Caco-2 (cell line): ENCODE measurements at regions of chr12 and their contacts with region 1.

Region 1: GRCh38 chr12:124036674-124037109 is 63.7 kb downstream of the ZNF664 start:
- DNase-seq: peak in 1 of 2 experiments; percentile 38
- H3K4me3 ChIP-seq: no peak overlapping the region
- H3K4me3 Mint-ChIP-seq: no peak overlapping the region
- H3K27ac Mint-ChIP-seq: no peak overlapping the region
- H3K4me1 ChIP-seq: peaks cover 6% of the 10 kb centered on the region
- H3K4me1 Mint-ChIP-seq: peaks cover 12% of the 10 kb centered on the region
- H3K27me3 ChIP-seq: no peaks in the 10 kb centered on the region
- H3K27me3 Mint-ChIP-seq: no peaks in the 10 kb centered on the region
- CTCF ChIP-seq: peak; percentile 87 to 94

Region 2: DNA sequence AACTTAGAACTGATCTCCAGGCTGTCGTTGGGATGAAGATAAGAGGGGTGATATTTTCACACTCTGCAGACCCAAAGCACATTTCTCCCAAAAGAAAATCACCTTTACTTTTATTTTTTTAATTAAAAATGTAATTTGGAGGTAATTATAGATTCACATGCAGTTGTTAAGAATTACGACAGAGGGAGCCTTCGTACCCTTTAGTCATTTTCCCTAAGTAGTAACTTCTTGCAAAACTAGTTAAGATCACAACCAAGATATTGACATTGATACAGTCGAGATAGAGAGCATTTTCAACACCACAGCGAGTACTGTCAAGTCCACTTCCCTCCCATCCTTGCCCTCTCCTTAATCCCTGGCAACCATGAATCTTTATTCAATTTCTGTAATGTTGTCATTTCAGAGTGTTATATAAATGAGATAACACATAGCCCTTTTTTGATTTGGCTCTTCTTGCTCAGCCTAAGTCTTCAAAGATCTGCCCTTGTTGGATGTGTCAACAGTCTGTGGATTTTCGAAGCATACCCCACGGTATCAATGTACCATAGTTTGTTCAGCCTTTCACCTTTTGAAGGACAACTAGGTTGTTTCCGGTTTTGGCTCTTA is 235.0 kb before region 1 on chr12:
- CTCF ChIA-PET with region 1: interaction called, 4 read pairs
- POLR2A ChIA-PET with region 1: no interaction called
- intact Hi-C with region 1: loop called (anchors 2 kb)
- DNase-seq: no peak
- H3K4me3 ChIP-seq: no peak overlapping the region
- H3K4me3 Mint-ChIP-seq: no peak overlapping the region
- H3K27ac Mint-ChIP-seq: no peak overlapping the region
- H3K4me1 ChIP-seq: no peaks in the 10 kb centered on the region
- H3K4me1 Mint-ChIP-seq: no peaks in the 10 kb centered on the region
- H3K27me3 ChIP-seq: no peaks in the 10 kb centered on the region
- H3K27me3 Mint-ChIP-seq: peaks cover 6% of the 10 kb centered on the region
- CTCF ChIP-seq: peak in 1 of 2 experiments; percentile 40

Region 3: DNA sequence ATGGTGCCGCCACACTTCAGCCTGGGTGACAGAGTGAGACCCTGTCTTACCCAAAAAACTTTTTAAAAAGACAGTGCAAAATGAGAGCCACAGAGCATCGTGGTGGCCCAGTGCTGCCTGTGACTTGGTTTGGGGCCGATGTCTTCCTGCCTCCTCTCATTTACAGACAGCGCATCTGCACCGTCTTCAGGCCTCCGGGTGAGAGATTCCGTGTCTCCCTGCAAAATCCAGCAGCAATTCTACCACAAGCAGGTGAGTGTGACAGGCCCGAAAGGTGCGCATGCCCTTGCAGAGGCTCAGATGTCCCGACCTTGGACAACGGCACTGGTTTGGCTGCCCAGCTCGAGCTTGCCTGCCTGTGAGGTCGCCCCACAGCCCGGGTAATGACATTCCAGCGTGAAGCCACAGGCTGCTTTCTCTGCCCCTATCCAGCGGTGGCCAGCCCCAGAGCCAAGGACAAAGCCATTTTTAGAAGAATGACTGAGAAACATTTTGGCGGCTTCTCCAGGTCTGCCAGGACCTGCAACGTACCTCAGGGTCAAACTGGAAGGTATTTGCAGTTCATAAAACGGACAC is 187.9 kb after region 1 on chr12:
- CTCF ChIA-PET with region 1: no interaction called
- POLR2A ChIA-PET with region 1: no interaction called
- intact Hi-C with region 1: loop called (anchors 2 kb)
- DNase-seq: peak in 1 of 2 experiments; percentile 28
- H3K4me3 ChIP-seq: no peak overlapping the region
- H3K4me3 Mint-ChIP-seq: no peak overlapping the region
- H3K27ac Mint-ChIP-seq: no peak overlapping the region
- H3K4me1 ChIP-seq: no peaks in the 10 kb centered on the region
- H3K4me1 Mint-ChIP-seq: no peaks in the 10 kb centered on the region
- H3K27me3 ChIP-seq: no peaks in the 10 kb centered on the region
- H3K27me3 Mint-ChIP-seq: no peaks in the 10 kb centered on the region
- CTCF ChIP-seq: peak in 1 of 2 experiments; percentile 9

Region 4: GRCh38 chr12:124321040-124321481 is 284.4 kb after region 1 on chr12:
- CTCF ChIA-PET with region 1: interaction called, 4 read pairs
- POLR2A ChIA-PET with region 1: no interaction called
- intact Hi-C with region 1: loop called (anchors 1 kb)
- DNase-seq: peak; percentile 66 to 80
- H3K4me3 ChIP-seq: no peak overlapping the region
- H3K4me3 Mint-ChIP-seq: no peak overlapping the region
- H3K27ac Mint-ChIP-seq: no peak overlapping the region
- H3K4me1 ChIP-seq: peaks cover 5% of the 10 kb centered on the region; the same call in 1 of the 2 replicates
- H3K4me1 Mint-ChIP-seq: peaks cover 8% of the 10 kb centered on the region
- H3K27me3 ChIP-seq: no peaks in the 10 kb centered on the region
- H3K27me3 Mint-ChIP-seq: no peaks in the 10 kb centered on the region
- CTCF ChIP-seq: peak; percentile 79 to 84

Region 5: GRCh38 chr12:124767066-124767821 is 730.6 kb after region 1 on chr12:
- CTCF ChIA-PET with region 1: interaction called, 5 read pairs
- POLR2A ChIA-PET with region 1: no interaction called
- intact Hi-C with region 1: loop called (anchors 1 kb)
- DNase-seq: peak; percentile 74 to 88
- H3K4me3 ChIP-seq: no peak overlapping the region
- H3K4me3 Mint-ChIP-seq: no peak overlapping the region
- H3K27ac Mint-ChIP-seq: no peak overlapping the region
- H3K4me1 ChIP-seq: peaks cover 19% of the 10 kb centered on the region; the same call in 1 of the 2 replicates
- H3K4me1 Mint-ChIP-seq: peaks cover 36% of the 10 kb centered on the region
- H3K27me3 ChIP-seq: no peaks in the 10 kb centered on the region
- H3K27me3 Mint-ChIP-seq: no peaks in the 10 kb centered on the region
- CTCF ChIP-seq: peak; percentile 93 to 99